ENCODE measurements at regions of chr5 and their contacts with region 1.

Region 1: GRCh38 chr5:169980418-169981053 is at the start of gene INSYN2B:
- DNase-seq: peak; percentile 71
- H3K4me3 ChIP-seq: peak within 1 kb of the TSS; percentile 76
- H3K27ac ChIP-seq: peak within 1 kb of the TSS; percentile 57
- H3K27me3 ChIP-seq: no peaks in the 10 kb centered on the region
- CTCF ChIP-seq: peak; percentile 66
- polyA plus RNA-seq, gene INSYN2B: 6.1 and 6.8 TPM in 2 replicates

Region 2: DNA sequence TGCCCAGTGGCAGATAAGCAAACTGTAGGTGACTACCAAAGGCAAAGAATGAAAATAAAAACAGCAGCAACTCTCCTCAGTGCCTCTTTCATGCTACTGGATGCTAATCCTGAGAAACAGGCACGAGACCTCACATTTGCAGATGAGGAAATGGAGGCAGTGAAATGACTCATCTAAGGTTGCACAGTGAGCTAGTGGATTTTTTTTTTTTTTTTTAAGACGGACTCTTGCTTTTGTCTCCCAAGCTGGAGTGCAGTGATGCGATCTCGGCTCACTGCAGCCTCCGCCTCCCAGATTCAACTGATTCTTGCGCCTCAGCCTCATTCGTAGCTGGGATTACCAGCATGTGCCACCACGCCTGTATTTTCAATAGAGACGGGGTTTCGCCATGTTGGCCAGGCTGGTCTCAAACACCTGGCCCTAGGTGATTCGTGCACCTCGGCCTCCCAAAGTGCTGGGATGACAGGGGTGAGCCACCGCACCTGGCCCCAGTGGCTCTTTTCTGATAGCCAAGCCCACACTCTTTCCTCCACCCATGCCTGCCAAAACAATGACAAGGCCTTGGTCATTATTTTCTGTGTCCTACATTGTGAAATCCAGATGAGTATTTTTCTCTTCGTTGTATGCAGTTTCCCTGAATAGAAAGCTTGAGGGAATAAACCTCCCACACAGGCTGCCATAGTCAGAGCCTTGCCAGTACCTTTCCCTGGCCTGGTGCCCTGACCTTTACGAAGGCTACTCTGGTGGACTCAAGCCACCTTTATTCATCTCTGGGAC is 324.2 kb before region 1 on chr5:
- CTCF ChIA-PET with region 1: interaction called, 12 read pairs
- POLR2A ChIA-PET with region 1: no interaction called
- DNase-seq: no peak
- H3K4me3 ChIP-seq: no peak overlapping the region
- H3K27ac ChIP-seq: no peak overlapping the region
- H3K27me3 ChIP-seq: no peaks in the 10 kb centered on the region
- CTCF ChIP-seq: no peak

Region 3: DNA sequence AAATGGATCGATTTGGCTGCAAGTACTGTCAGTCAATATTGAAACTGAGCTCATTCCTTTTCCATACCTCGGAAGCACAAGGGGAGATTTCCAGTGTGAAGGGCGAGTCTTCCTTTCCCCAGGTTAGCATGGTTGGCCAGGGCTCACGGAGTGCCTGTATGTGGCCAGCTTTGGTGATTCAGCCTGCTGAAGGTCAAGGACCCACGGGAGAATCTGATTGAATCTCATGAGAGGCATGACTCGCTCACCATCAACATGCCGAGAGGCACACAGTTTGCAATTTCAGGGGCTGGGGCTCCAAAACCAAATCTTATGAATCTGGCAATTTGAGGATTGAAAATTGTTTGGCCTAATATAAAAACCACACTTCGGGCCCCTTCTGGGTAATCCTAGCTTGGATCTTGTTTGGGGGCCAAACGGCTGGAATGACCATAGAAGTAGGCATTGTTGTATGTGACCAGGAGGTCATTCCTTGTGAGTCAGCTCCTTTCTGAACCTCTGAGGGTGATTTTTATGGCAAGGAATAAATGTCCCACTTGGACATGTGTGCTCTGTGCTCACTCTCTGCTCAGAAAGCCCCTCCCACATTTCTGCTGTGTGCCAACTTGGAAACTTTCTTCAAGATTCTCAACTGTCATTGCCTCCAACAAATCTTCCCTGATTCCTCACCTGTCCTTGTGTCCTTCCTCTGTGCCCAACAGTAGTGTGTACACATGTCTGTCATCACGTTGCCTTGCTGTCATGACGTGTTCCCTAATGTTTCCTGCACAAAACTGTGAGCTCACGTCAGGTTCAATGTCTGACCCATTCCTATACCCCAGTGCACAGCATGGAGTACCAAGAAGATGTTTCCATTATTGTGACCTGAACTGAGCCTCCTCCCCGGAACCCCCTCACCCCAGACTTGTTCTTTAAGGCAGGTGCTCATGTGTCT is 273.5 kb before region 1 on chr5:
- CTCF ChIA-PET with region 1: interaction called, 25 read pairs
- POLR2A ChIA-PET with region 1: interaction called, 4 read pairs
- DNase-seq: peak; percentile 37
- H3K4me3 ChIP-seq: no peak overlapping the region
- H3K27ac ChIP-seq: peak overlapping the region; percentile 67
- H3K27me3 ChIP-seq: no peaks in the 10 kb centered on the region
- CTCF ChIP-seq: no peak

Region 4: DNA sequence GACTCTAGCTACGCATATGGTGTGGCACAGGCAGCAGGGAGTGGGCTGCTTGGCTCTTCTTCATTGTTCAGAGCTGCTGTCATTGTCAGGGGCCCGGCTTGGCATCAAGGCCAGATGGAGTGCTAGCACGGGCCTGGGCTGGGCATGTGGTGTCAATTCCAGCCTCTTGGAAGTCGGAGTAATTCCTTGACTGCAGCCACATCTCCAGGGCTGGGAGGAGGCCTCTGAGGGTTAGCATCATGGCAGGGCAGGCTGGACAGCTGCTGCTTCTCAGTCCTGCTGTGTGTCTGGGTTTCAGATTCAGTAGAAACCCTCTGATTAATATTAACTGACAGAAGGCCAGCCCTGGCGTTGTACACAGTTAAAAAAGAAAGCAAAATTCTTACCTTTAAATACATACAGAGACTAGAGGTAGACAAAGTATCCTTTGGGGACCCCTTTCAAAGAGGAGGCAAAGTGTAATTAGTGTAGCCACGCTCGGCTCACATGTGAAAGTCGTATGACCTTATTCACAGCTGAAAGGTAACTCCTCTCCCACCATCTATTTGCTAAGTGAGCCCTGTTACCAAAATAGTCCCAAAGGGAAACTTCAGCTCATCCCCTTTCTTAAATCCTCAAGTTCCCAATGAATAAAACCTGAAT is 217.0 kb before region 1 on chr5:
- CTCF ChIA-PET with region 1: interaction called, 24 read pairs
- POLR2A ChIA-PET with region 1: no interaction called
- DNase-seq: no peak
- H3K4me3 ChIP-seq: no peak overlapping the region
- H3K27ac ChIP-seq: no peak overlapping the region
- H3K27me3 ChIP-seq: no peaks in the 10 kb centered on the region
- CTCF ChIP-seq: no peak

Region 5: GRCh38 chr5:169861934-169862333 is 118.6 kb before region 1 on chr5:
- CTCF ChIA-PET with region 1: interaction called, 18 read pairs
- POLR2A ChIA-PET with region 1: no interaction called
- DNase-seq: peak; percentile 70
- H3K4me3 ChIP-seq: no peak overlapping the region
- H3K27ac ChIP-seq: no peak overlapping the region
- H3K27me3 ChIP-seq: no peaks in the 10 kb centered on the region
- CTCF ChIP-seq: no peak

Region 6: GRCh38 chr5:169921384-169921783 is 59.2 kb before region 1 on chr5:
- CTCF ChIA-PET with region 1: interaction called, 15 read pairs
- POLR2A ChIA-PET with region 1: no interaction called
- DNase-seq: no peak
- H3K4me3 ChIP-seq: no peak overlapping the region
- H3K27ac ChIP-seq: no peak overlapping the region
- H3K27me3 ChIP-seq: no peaks in the 10 kb centered on the region
- CTCF ChIP-seq: no peak

Region 7: DNA sequence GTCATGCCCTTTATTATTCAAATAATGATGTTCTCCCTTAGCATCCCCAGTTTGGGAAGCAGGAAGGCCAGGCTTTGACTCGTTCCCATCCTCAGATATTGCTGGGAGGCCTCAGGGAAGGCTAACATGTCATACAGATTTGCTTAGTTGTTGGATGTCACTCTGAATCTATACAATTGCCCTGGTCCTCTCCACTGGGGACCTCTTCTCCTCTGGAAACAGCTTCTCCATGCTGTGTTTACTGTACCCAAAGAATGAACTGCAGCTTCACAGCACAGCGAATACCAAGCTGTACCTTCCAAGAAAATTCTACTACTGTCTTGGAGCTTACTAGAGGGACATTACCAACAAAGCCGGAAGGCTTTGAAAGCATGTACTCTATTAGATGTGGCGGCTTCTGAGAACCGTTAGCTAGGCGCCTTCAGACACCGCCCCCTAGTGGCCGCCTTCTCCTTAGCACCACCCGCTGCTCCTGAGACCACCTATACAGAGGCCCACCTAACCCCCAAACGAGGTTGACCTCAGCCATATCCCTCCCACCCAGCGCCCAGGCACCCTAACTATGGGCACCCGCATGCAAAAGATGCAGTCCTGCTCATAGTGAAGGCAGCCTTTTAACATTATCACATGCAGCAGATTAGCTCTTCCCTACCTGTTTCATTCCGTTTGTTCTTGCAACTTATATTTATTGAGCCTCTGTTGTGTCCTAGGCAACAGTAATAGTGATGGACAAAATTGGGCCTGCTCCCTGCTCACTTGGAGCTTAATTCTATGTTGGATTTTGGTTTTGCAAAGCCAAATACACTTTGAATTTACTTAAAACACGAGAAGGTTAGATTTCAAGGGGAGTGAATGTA is 90.2 kb after region 1 on chr5:
- CTCF ChIA-PET with region 1: interaction called, 13 read pairs
- POLR2A ChIA-PET with region 1: no interaction called
- DNase-seq: peak; percentile 3
- H3K4me3 ChIP-seq: no peak overlapping the region
- H3K27ac ChIP-seq: no peak overlapping the region
- H3K27me3 ChIP-seq: no peaks in the 10 kb centered on the region
- CTCF ChIP-seq: peak; percentile 75